HepG2 (cell line): ENCODE measurements at regions of chr13 and their contacts with region 1.

Region 1: DNA sequence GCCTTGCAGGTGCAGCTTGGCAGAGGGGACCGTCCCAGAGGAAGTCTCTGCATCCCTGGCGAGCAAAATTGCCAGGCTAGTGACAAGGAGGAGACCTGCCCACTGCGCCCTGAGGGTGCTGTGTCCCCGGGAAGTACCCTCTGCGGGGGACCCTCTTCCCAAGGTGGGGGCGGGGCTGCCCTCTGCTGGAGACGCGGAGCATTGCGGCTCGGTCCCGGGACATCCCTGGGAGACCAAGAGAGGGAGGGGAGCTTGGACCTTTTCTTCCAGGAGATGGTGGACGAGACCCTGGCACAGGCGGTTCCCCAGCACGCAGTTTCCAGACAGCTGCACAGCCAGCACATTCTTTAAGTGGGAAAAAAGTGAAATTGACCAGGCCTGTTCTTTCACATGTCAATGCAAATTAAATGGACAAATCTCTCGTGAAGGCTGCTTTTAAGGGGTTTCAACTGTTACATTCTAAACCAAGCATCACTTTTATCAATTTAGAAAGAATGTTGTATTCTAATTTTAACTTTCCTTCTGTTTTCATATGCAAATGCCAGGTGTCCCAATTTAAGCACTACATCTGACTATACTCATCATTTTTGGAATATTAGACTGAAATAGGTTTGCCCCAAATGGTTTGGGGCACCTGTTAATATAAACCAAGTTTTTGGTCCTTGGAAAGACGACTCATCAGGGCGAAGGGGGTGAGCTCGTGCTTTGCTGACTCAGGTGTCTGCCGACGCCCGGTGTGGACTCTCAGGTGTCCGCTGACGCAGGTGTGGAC is 60.7 kb downstream of the MCF2L start:
- DNase-seq: peak; percentile 25
- ATAC-seq: peak; percentile 77
- H3K4me3 ChIP-seq: no peak overlapping the region
- H3K27ac ChIP-seq: no peak overlapping the region
- H3K4me1 ChIP-seq: peaks cover 10% of the 10 kb centered on the region
- H3K27me3 ChIP-seq: no peaks in the 10 kb centered on the region
- CTCF ChIP-seq: peak; percentile 96
- EP300 ChIP-seq: no peak
- POLR2A ChIP-seq: no peak
- RAD21 ChIP-seq: peak; percentile 88

Region 2: DNA sequence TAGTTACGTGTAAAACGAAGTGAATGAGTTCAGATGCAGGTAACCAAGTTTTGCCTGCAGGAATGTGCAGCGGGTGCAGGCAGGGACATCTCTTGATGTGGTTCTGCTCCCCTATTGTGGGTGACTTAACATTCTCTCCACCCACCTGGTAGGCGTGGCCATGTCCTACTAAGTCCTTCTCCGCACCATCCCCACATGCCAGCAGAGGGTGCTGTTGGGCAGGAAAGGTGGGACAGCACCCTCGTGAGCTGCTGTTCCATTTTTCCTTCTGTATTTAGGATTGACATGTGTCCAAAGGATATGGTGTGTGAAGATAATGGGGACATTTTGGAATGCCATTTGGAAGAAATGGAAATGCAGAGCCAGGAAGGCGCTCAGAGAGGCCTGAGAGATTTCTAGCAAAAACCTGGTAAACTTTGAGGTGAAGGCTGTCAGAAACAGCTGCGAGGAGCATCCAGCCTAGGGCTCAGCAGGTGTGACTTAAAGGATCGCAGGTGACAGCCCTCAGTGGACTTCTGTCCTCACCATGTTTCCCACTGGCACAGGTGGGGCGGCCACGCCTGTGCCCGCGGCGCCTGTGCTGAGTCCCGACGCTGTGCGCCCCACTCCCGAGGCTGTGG is 86.9 kb before region 1 on chr13:
- CTCF ChIA-PET with region 1: interaction called, 45 read pairs
- POLR2A ChIA-PET with region 1: interaction called, 4 read pairs
- in situ Hi-C with region 1: no loop called
- intact Hi-C with region 1: loop called (anchors 1 kb)
- DNase-seq: peak; percentile 94
- ATAC-seq: peak; percentile 92
- H3K4me3 ChIP-seq: peak overlapping the region; percentile 42 to 72 (median 67)
- H3K27ac ChIP-seq: no peak overlapping the region
- H3K4me1 ChIP-seq: peaks cover 30% of the 10 kb centered on the region
- H3K27me3 ChIP-seq: no peaks in the 10 kb centered on the region; a peak in 1 of 5 replicates
- CTCF ChIP-seq: peak; percentile 99
- EP300 ChIP-seq: no peak
- POLR2A ChIP-seq: no peak; a peak in 1 of 4 replicates
- RAD21 ChIP-seq: peak; percentile 95

Region 3: DNA sequence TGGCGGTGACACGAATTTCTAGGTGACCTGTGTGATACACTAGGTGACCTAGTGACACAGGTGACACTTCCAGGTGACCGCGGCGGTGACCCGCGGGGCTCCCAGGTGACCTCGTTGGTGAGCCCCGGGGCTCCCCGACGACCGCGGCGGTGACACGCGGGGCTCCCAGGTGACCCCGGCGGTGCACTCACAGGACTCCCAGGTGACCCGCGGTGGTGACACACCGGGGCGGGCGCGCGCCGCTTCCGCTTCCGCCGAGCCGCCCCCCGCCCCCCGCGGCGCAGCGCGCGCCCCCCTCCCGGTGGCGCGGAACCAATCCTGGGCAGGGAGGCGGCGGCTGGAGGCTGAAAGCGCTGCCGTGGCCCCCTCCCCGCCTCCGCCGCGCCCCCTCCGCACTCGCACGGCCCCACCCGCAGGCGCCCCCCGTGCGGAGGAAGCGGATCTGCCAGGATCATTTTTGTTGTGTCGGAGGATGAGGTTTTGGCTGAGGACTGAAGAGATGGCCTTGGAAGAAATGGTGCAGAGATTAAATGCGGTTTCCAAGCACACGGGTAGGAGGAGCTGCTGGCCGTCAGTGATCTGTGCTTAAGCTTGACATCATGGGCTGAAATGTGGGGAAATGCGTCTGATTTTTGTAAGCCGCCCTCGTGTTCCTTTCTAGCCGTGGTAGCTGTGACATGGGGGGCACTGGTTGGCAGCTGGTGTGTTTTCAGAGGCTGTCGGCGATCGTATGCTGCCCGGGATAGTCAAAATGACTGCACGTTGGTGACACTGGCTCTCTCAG is 60.6 kb before region 1 on chr13 and contains the start of gene MCF2L:
- CTCF ChIA-PET with region 1: no interaction called
- POLR2A ChIA-PET with region 1: interaction called, 4 read pairs
- in situ Hi-C with region 1: no loop called
- intact Hi-C with region 1: loop called (anchors 2 kb)
- DNase-seq: peak; percentile 56
- ATAC-seq: peak; percentile 86
- H3K4me3 ChIP-seq: peak within 1 kb of the TSS; percentile 69 to 85 (median 83)
- H3K27ac ChIP-seq: peak within 1 kb of the TSS; percentile 56
- H3K4me1 ChIP-seq: peaks cover 43% of the 10 kb centered on the region
- H3K27me3 ChIP-seq: no peaks in the 10 kb centered on the region
- CTCF ChIP-seq: peak; percentile 59
- EP300 ChIP-seq: no peak
- POLR2A ChIP-seq: no peak
- RAD21 ChIP-seq: 0 out of 2 replicates have a peak, but pooled peaks have one; percentile 7
- total RNA-seq, gene MCF2L: 13.7 and 19.4 TPM in 2 replicates

Region 4: GRCh38 chr13:113220877-113221276 is 191.2 kb after region 1 on chr13:
- CTCF ChIA-PET with region 1: interaction called, 5 read pairs
- POLR2A ChIA-PET with region 1: no interaction called
- in situ Hi-C with region 1: no loop called
- intact Hi-C with region 1: loop called (anchors 2 kb)
- DNase-seq: no peak
- ATAC-seq: peak; percentile 59
- H3K4me3 ChIP-seq: no peak overlapping the region
- H3K27ac ChIP-seq: peak overlapping the region; percentile 57
- H3K4me1 ChIP-seq: peaks cover 51% of the 10 kb centered on the region
- H3K27me3 ChIP-seq: no peaks in the 10 kb centered on the region
- CTCF ChIP-seq: peak; percentile 65
- EP300 ChIP-seq: no peak
- POLR2A ChIP-seq: no peak
- RAD21 ChIP-seq: peak; percentile 49; the same call in 1 of the 2 replicates